Psoas muscle (tissue), 8 donors: ENCODE measurements at regions of chr20 and their contacts with region 1.

Region 1: DNA sequence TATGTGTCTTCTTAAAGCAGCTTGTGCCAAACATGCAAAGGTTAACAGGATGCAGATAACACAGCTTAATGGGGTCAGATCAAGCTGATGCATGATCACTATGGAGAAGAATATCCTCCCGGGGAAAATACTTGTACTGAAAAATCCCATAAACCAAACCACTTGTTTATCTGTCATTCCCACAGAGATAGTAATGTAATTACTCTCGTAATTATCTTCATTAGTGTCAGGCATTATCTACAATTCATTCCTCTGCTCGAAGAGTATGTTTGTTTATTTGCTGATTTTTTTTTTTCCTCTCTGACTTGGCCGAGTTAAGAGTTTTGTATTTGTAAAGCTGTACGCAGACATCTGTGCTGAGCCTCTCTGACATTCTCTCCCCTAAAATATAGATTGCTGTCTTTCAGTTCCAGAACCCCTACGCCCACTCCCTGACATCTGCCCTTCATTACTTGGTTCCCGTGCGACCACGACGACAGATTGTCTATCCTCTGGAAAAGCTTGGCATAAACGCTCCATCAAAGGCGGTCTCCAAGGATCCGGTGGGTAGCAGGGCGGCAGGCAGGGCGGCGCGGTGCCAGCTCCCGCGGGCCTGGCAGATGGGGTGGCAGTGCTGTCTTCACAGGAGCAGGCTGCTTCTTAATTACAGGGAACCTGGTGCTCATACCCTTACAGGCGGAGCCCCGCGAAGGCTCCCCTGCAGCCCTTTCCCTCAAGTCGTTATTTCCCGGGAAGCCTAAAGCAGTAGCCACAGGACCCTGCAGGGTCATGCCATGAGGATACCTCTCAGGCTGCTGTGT is 147.2 kb downstream of the CFAP61 start:
- DNase-seq: no peak
- ATAC-seq: no peak
- H3K4me3 ChIP-seq: no peak overlapping the region
- H3K27ac ChIP-seq: no peak overlapping the region
- H3K4me1 ChIP-seq: peaks cover 9% of the 10 kb centered on the region
- H3K27me3 ChIP-seq: no peaks in the 10 kb centered on the region
- CTCF ChIP-seq: no peak

Region 2: DNA sequence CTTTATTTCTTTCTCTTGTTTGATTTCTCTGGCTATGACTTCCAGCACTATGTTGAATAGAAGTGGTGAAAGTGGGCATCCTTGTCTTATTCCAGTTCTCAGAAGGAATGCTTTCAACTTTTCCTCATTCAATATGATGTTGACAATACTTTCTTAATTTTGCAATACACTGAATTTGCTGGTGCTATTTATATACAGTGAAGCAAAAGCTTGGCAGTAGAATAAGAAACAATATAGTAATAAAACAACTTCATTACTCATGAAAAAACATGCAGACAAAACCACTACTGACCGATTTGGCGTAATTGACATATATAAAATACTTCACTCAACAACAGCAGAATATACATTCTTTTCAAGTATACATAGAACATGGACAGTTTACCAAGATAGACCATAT is 50.8 kb before region 1 on chr20:
- intact Hi-C with region 1: loop called in 1 of 2 experiments (anchors 5 kb)
- DNase-seq: no peak
- ATAC-seq: peak in 3 of 4 donors; percentile 40 to 79 (median 53)
- H3K4me3 ChIP-seq: no peak overlapping the region
- H3K27ac ChIP-seq: peak overlapping the region; percentile 5
- H3K4me1 ChIP-seq: peaks cover 19% of the 10 kb centered on the region
- H3K27me3 ChIP-seq: no peaks in the 10 kb centered on the region
- CTCF ChIP-seq: no peak